ENCODE measurements at regions of chrX and their contacts with region 1.

Region 1: DNA sequence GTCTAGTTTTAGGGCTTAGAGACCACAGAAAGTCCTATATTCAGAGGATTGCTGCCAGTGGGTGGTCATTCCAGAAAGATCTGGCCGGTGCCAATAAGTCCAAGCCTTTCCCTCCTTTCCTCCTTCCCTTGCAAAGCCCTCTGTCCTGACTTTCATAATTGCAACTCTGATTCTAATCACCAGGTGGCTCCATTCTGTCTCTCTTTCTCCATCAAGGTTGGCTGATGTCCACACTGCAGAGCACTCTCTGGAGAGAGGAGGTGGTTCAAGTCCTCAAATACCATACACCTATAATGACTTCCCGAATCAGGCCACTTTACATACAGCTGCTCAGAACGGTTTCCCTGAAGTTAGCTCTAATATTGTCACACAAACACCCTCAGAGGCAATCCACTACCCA is 22.4 kb upstream of the ARMCX4 start:
- DNase-seq: no peak
- ATAC-seq: no peak
- H3K4me3 Mint-ChIP-seq: no peak overlapping the region
- H3K27ac Mint-ChIP-seq: no peak overlapping the region
- H3K4me1 Mint-ChIP-seq: no peaks in the 10 kb centered on the region
- H3K27me3 Mint-ChIP-seq: no peaks in the 10 kb centered on the region
- CTCF ChIP-seq: no peak

Region 2: DNA sequence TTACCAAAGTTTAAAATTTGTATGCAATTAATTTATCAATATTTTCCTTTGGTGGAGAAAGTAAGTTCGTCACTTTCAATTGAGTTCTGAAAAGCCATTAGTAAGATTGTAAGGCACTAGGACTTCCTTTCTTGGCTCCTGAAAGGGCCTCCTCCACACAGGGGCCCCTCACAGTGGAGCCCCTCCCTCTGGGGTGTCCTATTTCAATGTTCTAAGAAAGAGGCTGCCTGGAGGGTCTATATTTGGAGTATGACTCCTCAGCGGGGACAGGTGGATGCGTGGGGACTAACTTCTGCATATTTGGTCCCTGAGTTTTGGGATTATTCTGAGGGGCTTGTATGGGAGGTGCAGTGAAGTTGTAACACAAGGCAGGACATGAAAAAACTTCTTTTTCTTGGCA is 20.8 kb after region 1 on chrX:
- CTCF ChIA-PET with region 1: no interaction called
- POLR2A ChIA-PET with region 1: no interaction called
- intact Hi-C with region 1: loop called (anchors 1 kb)
- DNase-seq: no peak
- ATAC-seq: no peak
- H3K4me3 Mint-ChIP-seq: no peak overlapping the region
- H3K27ac Mint-ChIP-seq: no peak overlapping the region
- H3K4me1 Mint-ChIP-seq: peaks cover 10% of the 10 kb centered on the region
- H3K27me3 Mint-ChIP-seq: peaks cover 5% of the 10 kb centered on the region
- CTCF ChIP-seq: no peak

Region 3: DNA sequence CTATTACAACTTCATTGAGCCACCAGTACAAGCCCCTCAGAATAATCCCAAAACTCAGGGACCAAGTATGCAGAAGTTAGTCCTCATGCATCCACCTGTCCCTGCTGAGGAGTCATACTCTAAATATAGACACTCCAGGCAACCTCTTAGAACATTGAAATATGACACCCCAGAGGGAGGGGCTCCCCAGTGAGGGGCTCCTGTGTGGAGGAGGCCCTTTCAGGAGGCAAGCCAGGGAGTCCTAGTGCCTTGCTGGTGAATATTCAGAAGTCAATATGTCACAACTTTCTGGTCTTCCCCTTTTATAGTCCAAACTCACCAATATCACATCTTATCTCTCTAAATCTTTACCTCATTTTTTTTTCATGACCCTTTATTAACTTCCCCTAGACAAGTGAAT is 156.5 kb after region 1 on chrX:
- CTCF ChIA-PET with region 1: no interaction called
- POLR2A ChIA-PET with region 1: no interaction called
- intact Hi-C with region 1: no loop called
- DNase-seq: no peak
- ATAC-seq: no peak
- H3K4me3 Mint-ChIP-seq: peak overlapping the region; percentile 19
- H3K27ac Mint-ChIP-seq: no peak overlapping the region
- H3K4me1 Mint-ChIP-seq: peaks cover 17% of the 10 kb centered on the region
- H3K27me3 Mint-ChIP-seq: no peaks in the 10 kb centered on the region
- CTCF ChIP-seq: no peak

Measured in activated B cell treated with CpG ODN at 0.5 μM for 24 hours (primary cell).